CD4-positive, alpha-beta T cell (primary cell): ENCODE measurements at regions of chr3 and their contacts with region 1.

Region 1: DNA sequence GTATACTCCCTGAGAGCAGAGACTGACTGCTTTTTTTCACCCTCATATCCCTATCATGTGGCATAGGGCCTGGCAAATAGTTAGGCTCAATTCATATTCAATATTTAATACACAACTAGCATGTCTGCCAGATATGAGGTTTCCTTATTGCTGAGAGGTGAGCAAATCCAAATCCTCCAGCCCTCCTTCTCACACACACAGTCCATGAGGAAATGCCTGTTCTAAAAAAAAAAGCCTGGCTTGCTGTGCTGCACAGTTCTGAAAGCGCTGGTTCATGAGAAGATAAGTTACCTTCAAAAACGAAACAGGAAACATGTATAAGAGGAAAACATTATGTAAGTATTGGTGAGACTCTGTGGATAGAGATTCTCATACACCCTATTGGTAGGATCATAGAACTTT is 15.5 kb upstream of the ACAP2 start:
- DNase-seq: peak in 4 of 14 experiments; percentile 16 to 66 (median 63)
- ATAC-seq: peak; percentile 98
- H3K4me3 ChIP-seq: peak overlapping the region; percentile 37
- H3K4me3 Mint-ChIP-seq: peak overlapping the region; percentile 76
- H3K27ac ChIP-seq: peak overlapping the region in 1 of 2 donors; percentile 62
- H3K27ac Mint-ChIP-seq: peak overlapping the region; percentile 88
- H3K4me1 ChIP-seq: peaks cover 17% of the 10 kb centered on the region
- H3K4me1 Mint-ChIP-seq: peaks cover 31% of the 10 kb centered on the region
- H3K27me3 ChIP-seq: no peaks in the 10 kb centered on the region
- H3K27me3 Mint-ChIP-seq: no peaks in the 10 kb centered on the region
- CTCF ChIP-seq: no peak

Region 2: DNA sequence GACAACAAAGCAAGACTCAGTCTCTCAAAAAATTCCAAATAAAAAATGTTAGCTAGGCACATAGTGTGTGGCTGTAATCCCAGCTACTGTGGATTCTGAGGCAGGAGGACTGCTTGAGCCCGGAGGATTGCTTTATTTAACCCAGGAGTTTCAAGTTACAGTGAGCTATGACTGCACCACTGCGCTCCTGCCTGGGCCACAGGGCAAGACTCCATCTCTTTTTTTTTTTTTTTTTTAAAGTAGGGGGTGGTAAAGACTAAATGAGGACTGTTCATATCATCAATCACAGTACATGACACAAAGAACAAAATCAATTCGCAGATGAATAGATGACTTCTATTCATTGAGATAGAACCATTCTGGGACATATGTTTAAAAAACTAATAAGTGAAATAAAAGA is 63.6 kb before region 1 on chr3:
- CTCF ChIA-PET with region 1: no interaction called
- POLR2A ChIA-PET with region 1: no interaction called
- intact Hi-C with region 1: loop called in 1 of 2 experiments (anchors 5 kb)
- DNase-seq: no peak
- ATAC-seq: no peak
- H3K4me3 ChIP-seq: no peak overlapping the region
- H3K4me3 Mint-ChIP-seq: no peak overlapping the region
- H3K27ac ChIP-seq: no peak overlapping the region
- H3K27ac Mint-ChIP-seq: no peak overlapping the region
- H3K4me1 ChIP-seq: peaks cover 3% of the 10 kb centered on the region
- H3K4me1 Mint-ChIP-seq: peaks cover 40% of the 10 kb centered on the region
- H3K27me3 ChIP-seq: no peaks in the 10 kb centered on the region
- H3K27me3 Mint-ChIP-seq: no peaks in the 10 kb centered on the region
- CTCF ChIP-seq: no peak